Common myeloid progenitor, CD34-positive (primary cell): ENCODE measurements at regions of chr5 and their contacts with region 1.

Region 1: DNA sequence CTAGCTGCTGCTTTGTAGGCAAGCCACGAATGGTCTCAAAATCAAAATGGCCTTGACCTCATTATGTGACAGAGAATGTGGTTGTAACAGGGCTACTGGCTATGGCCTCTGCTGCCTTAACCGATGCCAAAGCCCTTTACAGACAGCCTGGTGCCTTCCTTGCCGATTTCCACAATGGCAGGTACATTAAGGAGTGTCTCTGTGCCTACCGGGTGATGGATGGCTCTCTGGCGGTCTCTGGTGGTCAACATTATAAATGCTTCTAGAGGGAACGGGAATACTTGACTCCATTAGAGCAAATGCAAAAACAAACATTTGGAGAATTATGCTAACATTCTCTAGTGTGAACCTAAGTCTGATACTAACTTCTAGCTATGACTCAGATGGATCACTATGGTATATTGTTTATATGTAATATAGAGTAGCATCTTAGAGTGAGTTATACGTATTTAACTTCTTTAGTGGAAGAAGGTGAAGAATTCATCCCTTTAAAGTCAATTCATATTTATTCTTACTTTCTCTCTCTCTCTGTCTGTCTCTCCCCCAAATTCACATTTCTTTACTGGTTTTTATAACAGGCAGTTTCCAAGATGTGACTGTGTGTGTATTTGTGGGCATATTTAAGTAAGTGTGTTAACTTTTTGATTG is 52.5 kb downstream of the RPS23 start:
- DNase-seq: peak; percentile 63 to 79 (median 74)
- H3K4me3 ChIP-seq: no peak overlapping the region
- H3K27ac ChIP-seq: no peak overlapping the region
- H3K4me1 ChIP-seq: peaks cover 0 to 16% (median 12%) of the 10 kb centered on the region in 4 experiments
- H3K27me3 ChIP-seq: no peaks in the 10 kb centered on the region

Region 2: DNA sequence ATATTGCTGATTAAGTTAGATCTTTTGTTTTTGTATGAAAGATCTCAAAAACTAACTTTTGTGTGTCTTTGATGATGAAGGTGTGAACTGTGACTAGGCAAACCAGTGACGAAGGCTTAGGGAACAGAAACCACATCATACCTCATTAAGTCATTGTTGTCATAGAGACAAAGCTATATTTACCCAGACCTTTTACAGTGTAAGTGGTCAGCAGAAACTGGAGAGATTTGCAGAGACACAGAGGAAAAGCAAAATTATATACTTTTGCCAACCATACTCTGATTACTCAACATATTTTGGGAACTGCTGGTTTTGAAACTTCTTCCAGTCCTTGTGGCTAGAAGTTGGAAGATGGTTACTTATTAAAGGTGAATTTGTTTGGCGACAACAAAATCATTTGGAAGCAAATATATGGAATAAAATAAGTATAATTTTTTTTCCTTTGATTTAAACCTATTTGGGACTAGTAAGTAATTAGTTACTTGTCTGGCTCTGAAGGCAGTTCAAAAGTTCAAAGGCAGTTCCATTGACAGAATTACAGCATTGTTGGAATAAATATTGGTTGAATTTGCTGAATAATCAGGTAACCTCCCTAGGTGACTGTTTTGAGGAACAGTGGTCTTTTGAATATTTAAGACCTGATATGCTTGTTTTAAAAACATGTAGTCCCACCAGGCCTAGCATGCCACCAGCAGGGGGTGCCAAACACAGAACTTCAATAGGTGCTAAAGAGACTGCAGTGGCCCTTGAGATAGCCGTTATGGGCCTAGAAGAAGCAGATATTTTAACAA is 51.3 kb before region 1 on chr5:
- CTCF ChIA-PET with region 1: interaction called, 44 read pairs
- POLR2A ChIA-PET with region 1: no interaction called
- DNase-seq: peak; percentile 85 to 90 (median 87)
- H3K4me3 ChIP-seq: no peak overlapping the region
- H3K27ac ChIP-seq: peak overlapping the region; percentile 56 to 78
- H3K4me1 ChIP-seq: peaks cover 5 to 10% (median 8%) of the 10 kb centered on the region in 4 experiments
- H3K27me3 ChIP-seq: no peaks in the 10 kb centered on the region

Region 3: DNA sequence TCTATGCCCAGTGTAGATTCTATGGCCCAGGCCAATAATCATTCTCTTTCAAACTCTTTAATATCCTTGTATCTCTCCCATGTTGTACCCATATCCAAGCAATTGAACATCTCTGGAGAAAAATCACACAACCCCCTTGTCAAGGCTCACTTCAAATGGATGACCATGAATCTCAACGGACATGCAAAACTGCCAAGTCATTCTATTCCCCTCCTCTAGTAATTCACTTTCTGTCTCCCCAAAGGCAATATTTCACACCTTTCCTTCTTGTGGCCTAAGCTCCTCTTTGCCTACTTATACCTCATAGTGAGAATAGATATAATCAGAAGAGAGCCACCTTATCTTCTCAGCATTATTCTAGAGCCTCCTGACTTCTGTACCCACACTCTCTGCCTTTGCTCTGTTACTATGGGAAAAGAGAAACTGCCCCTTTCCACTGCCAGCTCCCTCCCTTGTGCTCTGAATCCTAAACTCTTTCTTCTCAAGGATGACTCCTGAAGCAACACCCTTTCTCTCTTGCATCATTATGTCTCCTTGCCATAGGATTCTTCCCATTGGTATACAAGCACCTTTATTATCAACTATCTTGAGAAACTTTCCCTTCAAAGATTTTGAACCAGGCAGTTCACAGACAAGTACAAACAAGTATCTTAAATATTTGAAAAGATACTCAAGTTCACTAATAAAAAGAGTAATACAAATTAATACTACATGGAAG is 13.6 kb before region 1 on chr5:
- CTCF ChIA-PET with region 1: interaction called, 19 read pairs
- POLR2A ChIA-PET with region 1: no interaction called
- DNase-seq: no peak
- H3K4me3 ChIP-seq: no peak overlapping the region
- H3K27ac ChIP-seq: no peak overlapping the region
- H3K4me1 ChIP-seq: peaks cover 0 to 7% (median 0%) of the 10 kb centered on the region in 4 experiments
- H3K27me3 ChIP-seq: no peaks in the 10 kb centered on the region